ENCODE measurements at regions of chr11 and their contacts with region 1.

Region 1: GRCh38 chr11:118928108-118928870 is 2.6 kb upstream of the BCL9L start:
- DNase-seq: peak; percentile 94
- ATAC-seq: peak; percentile 57
- H3K4me3 Mint-ChIP-seq: peak overlapping the region; percentile 98
- H3K27ac Mint-ChIP-seq: peak overlapping the region; percentile 99
- H3K4me1 Mint-ChIP-seq: peaks cover 53% of the 10 kb centered on the region
- H3K27me3 Mint-ChIP-seq: no peaks in the 10 kb centered on the region

Region 2: DNA sequence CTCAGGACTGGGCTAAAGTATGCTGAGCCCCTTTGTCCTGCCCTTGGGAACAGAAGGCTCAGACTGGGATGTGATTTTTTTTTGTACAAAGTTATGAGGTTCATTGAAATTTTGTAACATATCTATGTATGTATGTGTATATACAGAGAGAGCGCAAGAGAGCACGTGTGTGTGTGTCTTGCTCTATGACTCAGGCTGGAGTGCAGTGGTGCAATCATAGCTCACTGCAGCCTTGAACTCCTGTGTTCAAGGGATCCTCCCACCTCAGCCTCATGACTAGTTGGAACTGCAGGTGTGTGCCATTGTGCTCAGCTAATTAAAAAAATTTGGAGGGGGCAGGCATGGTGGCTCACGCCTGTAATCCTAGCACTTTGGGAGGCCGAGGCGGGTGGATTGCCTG is 391.6 kb before region 1 on chr11:
- CTCF ChIA-PET with region 1: no interaction called
- POLR2A ChIA-PET with region 1: no interaction called
- DNase-seq: no peak
- ATAC-seq: no peak
- H3K4me3 Mint-ChIP-seq: no peak overlapping the region
- H3K27ac Mint-ChIP-seq: no peak overlapping the region
- H3K4me1 Mint-ChIP-seq: peaks cover 6% of the 10 kb centered on the region
- H3K27me3 Mint-ChIP-seq: no peaks in the 10 kb centered on the region

Region 3: DNA sequence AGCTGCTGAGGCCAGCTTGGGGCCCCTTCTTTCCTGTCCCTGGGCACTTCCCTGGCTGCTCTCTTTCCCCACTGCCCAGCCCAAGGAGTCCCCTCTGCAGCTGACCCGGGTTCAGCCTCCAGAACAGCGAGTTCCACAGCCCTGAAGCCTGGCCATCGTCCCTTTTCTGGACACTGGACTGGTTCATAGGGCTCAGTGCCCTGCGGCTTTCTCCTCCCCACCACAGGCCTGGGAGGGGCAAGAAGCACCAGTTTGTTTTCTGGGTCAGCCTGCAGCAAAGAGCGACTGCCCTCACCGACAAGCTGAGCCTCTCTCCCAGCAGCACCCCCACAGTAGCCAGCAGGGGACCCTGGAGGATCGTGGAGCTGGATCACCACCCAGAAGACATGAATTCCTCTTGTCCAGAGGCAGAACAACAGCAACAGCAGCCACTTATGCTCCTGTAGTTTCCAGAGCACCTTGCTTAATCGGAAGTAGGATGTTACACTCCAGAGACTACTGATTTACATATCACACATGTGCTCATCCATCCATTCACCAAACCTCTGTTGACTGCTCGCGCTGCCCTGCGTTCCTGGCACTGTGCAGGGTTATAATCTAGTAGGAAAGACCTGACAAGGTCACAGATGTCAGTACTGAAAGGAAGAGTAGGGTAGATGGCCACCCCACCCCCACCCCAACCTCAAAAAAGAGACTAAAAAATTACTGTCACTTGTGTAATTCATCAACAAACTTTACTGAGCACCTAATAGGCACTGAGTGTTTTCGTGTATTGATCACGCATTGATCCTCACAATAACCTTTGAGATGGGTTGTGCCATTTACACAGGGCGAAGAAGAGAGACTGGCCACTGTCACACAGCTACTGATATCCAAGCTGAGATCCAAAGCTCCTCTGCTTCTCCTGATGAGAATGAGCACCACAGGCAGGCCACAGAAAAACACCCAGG is 57.6 kb before region 1 on chr11:
- CTCF ChIA-PET with region 1: interaction called, 18 read pairs
- POLR2A ChIA-PET with region 1: interaction called, 12 read pairs
- DNase-seq: no peak
- ATAC-seq: peak; percentile 49
- H3K4me3 Mint-ChIP-seq: peak overlapping the region; percentile 75
- H3K27ac Mint-ChIP-seq: peak overlapping the region; percentile 98
- H3K4me1 Mint-ChIP-seq: peaks cover 54% of the 10 kb centered on the region
- H3K27me3 Mint-ChIP-seq: no peaks in the 10 kb centered on the region

Region 4: DNA sequence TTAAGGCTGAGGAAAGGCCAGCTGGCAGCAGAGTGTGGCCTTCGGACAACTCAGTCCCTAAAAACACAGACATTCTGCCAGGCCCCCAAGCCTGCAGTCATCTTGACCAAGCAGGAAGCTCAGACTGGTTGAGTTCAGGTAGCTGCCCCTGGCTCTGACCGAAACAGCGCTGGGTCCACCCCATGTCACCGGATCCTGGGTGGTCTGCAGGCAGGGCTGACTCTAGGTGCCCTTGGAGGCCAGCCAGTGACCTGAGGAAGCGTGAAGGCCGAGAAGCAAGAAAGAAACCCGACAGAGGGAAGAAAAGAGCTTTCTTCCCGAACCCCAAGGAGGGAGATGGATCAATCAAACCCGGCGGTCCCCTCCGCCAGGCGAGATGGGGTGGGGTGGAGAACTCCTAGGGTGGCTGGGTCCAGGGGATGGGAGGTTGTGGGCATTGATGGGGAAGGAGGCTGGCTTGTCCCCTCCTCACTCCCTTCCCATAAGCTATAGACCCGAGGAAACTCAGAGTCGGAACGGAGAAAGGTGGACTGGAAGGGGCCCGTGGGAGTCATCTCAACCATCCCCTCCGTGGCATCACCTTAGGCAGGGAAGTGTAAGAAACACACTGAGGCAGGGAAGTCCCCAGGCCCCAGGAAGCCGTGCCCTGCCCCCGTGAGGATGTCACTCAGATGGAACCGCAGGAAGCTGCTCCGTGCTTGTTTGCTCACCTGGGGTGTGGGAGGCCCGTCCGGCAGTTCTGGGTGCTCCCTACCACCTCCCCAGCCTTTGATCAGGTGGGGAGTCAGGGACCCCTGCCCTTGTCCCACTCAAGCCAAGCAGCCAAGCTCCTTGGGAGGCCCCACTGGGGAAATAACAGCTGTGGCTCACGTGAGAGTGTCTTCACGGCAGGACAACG is 32.9 kb before region 1 on chr11:
- CTCF ChIA-PET with region 1: interaction called, 29 read pairs
- POLR2A ChIA-PET with region 1: interaction called, 5 read pairs
- DNase-seq: peak; percentile 75
- ATAC-seq: peak; percentile 68
- H3K4me3 Mint-ChIP-seq: peak overlapping the region; percentile 53
- H3K27ac Mint-ChIP-seq: peak overlapping the region; percentile 83
- H3K4me1 Mint-ChIP-seq: peaks cover 65% of the 10 kb centered on the region
- H3K27me3 Mint-ChIP-seq: no peaks in the 10 kb centered on the region

Region 5: GRCh38 chr11:118907051-118908042 is 20.9 kb before region 1 on chr11:
- CTCF ChIA-PET with region 1: no interaction called
- POLR2A ChIA-PET with region 1: interaction called, 104 read pairs
- DNase-seq: peak; percentile 91
- ATAC-seq: peak; percentile 74
- H3K4me3 Mint-ChIP-seq: no peak overlapping the region
- H3K27ac Mint-ChIP-seq: peak overlapping the region; percentile 42
- H3K4me1 Mint-ChIP-seq: peaks cover 47% of the 10 kb centered on the region
- H3K27me3 Mint-ChIP-seq: no peaks in the 10 kb centered on the region

Region 6: DNA sequence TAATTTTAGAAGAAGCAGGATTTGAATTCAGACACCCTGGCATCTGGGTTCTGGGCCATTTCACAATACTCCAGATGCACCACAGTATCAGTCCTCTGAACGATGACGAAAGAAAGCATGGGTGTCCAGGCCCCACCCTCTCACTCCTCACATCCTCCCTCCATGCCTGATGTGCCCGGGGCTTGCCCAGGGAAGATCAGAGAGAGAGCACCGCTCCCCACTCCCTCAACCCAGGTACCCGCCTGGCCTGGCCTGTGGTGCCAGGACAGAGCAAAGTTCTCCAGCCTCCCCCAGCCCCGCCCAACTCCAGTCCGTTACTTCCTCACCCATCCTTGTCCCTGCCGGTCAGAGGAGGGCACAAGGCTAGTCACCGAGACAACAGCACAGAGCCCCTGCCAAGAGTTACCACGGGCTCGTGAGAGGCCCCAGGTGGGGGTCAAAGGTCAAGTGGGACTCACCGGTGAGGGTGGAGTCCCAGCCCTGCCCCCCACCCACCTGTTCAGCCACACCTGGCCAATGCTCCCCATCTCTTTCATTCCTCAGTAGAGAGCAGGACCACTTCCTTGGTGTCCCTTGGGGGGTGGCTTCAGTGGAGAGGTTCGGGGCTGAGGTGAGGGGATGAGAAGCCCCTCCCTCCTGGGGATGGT is 10.7 kb before region 1 on chr11:
- CTCF ChIA-PET with region 1: no interaction called
- POLR2A ChIA-PET with region 1: interaction called, 104 read pairs
- DNase-seq: peak; percentile 70
- ATAC-seq: peak; percentile 17
- H3K4me3 Mint-ChIP-seq: peak overlapping the region; percentile 80
- H3K27ac Mint-ChIP-seq: peak overlapping the region; percentile 96
- H3K4me1 Mint-ChIP-seq: peaks cover 88% of the 10 kb centered on the region
- H3K27me3 Mint-ChIP-seq: no peaks in the 10 kb centered on the region

Region 7: GRCh38 chr11:118939953-118940598 is 11.8 kb after region 1 on chr11:
- CTCF ChIA-PET with region 1: interaction called, 61 read pairs
- POLR2A ChIA-PET with region 1: interaction called, 11 read pairs
- DNase-seq: peak; percentile 76
- ATAC-seq: peak; percentile 90
- H3K4me3 Mint-ChIP-seq: peak overlapping the region; percentile 29
- H3K27ac Mint-ChIP-seq: peak overlapping the region; percentile 82
- H3K4me1 Mint-ChIP-seq: peaks cover 37% of the 10 kb centered on the region
- H3K27me3 Mint-ChIP-seq: no peaks in the 10 kb centered on the region

Region 8: DNA sequence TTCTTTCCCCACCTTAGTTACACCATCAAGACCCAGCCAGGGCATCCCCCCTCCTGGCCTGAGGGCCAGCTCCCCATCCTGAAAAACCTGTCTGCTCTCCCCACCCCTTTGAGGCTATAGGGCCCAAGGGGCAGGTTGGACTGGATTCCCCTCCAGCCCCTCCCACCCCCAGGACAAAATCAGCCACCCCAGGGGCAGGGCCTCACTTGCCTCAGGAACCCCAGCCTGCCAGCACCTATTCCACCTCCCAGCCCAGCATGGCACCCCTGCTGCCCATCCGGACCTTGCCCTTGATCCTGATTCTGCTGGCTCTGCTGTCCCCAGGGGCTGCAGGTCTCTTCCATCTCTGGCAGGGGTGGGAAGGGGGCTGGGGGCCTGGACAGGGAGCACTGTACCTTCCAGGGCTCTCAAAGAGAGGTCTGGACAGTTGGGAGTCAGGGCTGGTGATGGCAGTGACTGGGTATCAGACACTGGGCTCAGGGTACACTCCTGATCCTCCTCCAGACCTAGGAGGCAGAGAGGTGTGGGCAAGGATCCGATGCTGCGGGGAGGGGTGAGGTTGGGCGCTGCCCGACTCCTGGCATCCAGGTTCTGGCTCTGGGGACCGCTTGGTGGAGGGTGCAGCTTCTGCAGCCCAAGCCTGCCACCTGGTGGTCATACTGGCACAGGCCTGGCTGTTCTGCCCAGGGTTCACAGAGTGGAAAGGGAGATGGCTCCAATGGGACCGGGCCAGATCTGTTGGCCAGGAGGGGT is 28.0 kb after region 1 on chr11 and contains the start of gene UPK2:
- CTCF ChIA-PET with region 1: interaction called, 15 read pairs
- POLR2A ChIA-PET with region 1: no interaction called
- DNase-seq: peak; percentile 91
- ATAC-seq: peak; percentile 100
- H3K4me3 Mint-ChIP-seq: no peak within 1 kb of the TSS
- H3K27ac Mint-ChIP-seq: no peak within 1 kb of the TSS
- H3K4me1 Mint-ChIP-seq: peaks cover 5% of the 10 kb centered on the region
- H3K27me3 Mint-ChIP-seq: peaks cover 7% of the 10 kb centered on the region
- total RNA-seq, gene UPK2: not detected

Measured in activated CD8-positive, alpha-beta T cell treated with anti-CD3 and anti-CD28 coated beads, Interleukin-2, amount 10 ng/mL, durations not matched to agents 7 days and 5 days (primary cell).